Activated T-helper 2 cell treated with anti-CD3 and anti-CD28 coated beads, Interferon-gamma antibody, Interleukin-2, Interleukin-4, amounts not matched to agents 10 μg/mL and 5 μg/mL and 100 μg/mL, durations not matched to agents 14 hours and 24 hours and 36 hours (primary cell): ENCODE measurements at regions of chr7 and their contacts with region 1.

Region 1: GRCh38 chr7:4883374-4884144 is at the start of gene RADIL:
- DNase-seq: peak; percentile 84
- H3K4me3 Mint-ChIP-seq: peak within 1 kb of the TSS; percentile 51
- H3K27ac Mint-ChIP-seq: no peak within 1 kb of the TSS
- H3K4me1 Mint-ChIP-seq: peaks cover 4% of the 10 kb centered on the region
- H3K27me3 Mint-ChIP-seq: peaks cover 17% of the 10 kb centered on the region
- total RNA-seq, gene RADIL: 0.16 and 0.78 TPM in 2 replicates

Region 2: GRCh38 chr7:4830176-4830575 is 53.4 kb before region 1 on chr7:
- intact Hi-C with region 1: loop called (anchors 2 kb)
- DNase-seq: peak; percentile 31
- H3K4me3 Mint-ChIP-seq: no peak overlapping the region
- H3K27ac Mint-ChIP-seq: no peak overlapping the region
- H3K4me1 Mint-ChIP-seq: peaks cover 2% of the 10 kb centered on the region
- H3K27me3 Mint-ChIP-seq: no peaks in the 10 kb centered on the region

Region 3: GRCh38 chr7:4861673-4862072 is 21.9 kb before region 1 on chr7 and contains the start of gene PAPOLB:
- intact Hi-C with region 1: no loop called
- DNase-seq: no peak
- H3K4me3 Mint-ChIP-seq: no peak within 1 kb of the TSS
- H3K27ac Mint-ChIP-seq: no peak within 1 kb of the TSS
- H3K4me1 Mint-ChIP-seq: no peaks in the 10 kb centered on the region
- H3K27me3 Mint-ChIP-seq: peaks cover 54% of the 10 kb centered on the region
- total RNA-seq, gene PAPOLB: not detected in 2 replicates